Caco-2 (cell line): ENCODE measurements at regions of chr14 and their contacts with region 1.

Region 1: GRCh38 chr14:21039585-21040369 is 2.4 kb upstream of the RNASE7 start:
- DNase-seq: peak; percentile 54 to 68
- H3K4me3 ChIP-seq: no peak overlapping the region
- H3K4me3 Mint-ChIP-seq: no peak overlapping the region
- H3K27ac Mint-ChIP-seq: no peak overlapping the region
- H3K4me1 ChIP-seq: peaks cover 24% of the 10 kb centered on the region
- H3K4me1 Mint-ChIP-seq: peaks cover 21% of the 10 kb centered on the region
- H3K27me3 ChIP-seq: no peaks in the 10 kb centered on the region
- H3K27me3 Mint-ChIP-seq: peaks cover 10% of the 10 kb centered on the region
- CTCF ChIP-seq: peak; percentile 60 to 72

Region 2: DNA sequence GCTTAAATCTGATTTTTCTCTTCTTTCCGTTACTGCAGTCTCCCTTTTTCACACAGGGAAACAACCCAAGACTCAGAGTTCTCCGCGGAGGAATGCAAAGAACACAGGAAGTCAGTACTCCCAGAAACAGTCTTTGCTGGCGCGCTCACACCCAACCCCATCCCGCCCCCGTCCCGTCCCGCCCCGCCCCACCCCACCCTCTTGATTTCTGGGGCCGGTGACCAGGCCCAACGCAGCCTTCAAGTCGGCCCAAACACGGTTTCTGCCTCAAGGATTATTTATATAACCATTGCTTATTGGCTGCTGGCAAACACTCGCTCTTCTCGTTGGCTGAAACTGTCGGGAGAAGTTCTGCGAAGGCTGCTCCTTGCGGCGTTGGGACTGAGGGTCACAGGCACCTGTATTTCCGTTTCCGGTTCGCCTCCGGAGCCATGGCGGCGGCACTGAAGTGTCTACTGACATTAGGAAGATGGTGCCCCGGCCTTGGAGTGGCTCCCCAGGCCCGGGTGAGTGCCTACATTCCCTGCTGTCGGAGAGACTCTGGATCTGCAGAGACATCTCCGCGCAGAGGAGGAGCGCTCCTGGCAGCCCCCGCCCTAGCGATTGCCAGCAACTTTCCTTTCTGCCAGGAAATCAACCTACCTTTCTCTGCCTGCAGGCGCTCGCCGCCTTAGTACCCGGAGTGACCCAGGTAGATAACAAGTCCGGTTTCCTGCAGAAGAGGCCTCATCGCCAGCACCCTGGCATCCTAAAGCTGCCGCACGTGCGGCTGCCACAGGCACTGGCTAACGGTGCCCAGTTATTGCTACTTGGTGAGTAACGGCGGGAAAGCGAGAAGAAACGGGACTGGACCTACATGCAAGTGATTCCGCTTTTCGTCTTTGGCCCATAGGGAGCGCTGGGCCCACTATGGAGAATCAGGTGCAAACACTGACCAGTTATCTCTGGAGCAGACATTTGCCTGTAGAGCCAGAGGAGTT is 49.9 kb before region 1 on chr14 and contains the start of gene METTL17:
- CTCF ChIA-PET with region 1: no interaction called
- POLR2A ChIA-PET with region 1: no interaction called
- intact Hi-C with region 1: loop called (anchors 1 kb)
- DNase-seq: peak; percentile 91 to 95
- H3K4me3 ChIP-seq: peak within 1 kb of the TSS; percentile 65
- H3K4me3 Mint-ChIP-seq: peak within 1 kb of the TSS; percentile 71
- H3K27ac Mint-ChIP-seq: peak within 1 kb of the TSS; percentile 33
- H3K4me1 ChIP-seq: peaks cover 19% of the 10 kb centered on the region
- H3K4me1 Mint-ChIP-seq: peaks cover 6% of the 10 kb centered on the region
- H3K27me3 ChIP-seq: no peaks in the 10 kb centered on the region
- H3K27me3 Mint-ChIP-seq: no peaks in the 10 kb centered on the region
- CTCF ChIP-seq: peak in 1 of 2 experiments; percentile 52
- total RNA-seq, gene METTL17: 78.8 and 80.5 TPM in 2 replicates

Region 3: GRCh38 chr14:21024585-21025370 is 15.0 kb before region 1 on chr14 and contains the start of gene NDRG2:
- CTCF ChIA-PET with region 1: no interaction called
- POLR2A ChIA-PET with region 1: no interaction called
- intact Hi-C with region 1: loop called (anchors 1 kb)
- DNase-seq: peak; percentile 84 to 86
- H3K4me3 ChIP-seq: peak within 1 kb of the TSS; percentile 73
- H3K4me3 Mint-ChIP-seq: peak within 1 kb of the TSS; percentile 72
- H3K27ac Mint-ChIP-seq: peak within 1 kb of the TSS; percentile 73
- H3K4me1 ChIP-seq: peaks cover 15% of the 10 kb centered on the region
- H3K4me1 Mint-ChIP-seq: peaks cover 18% of the 10 kb centered on the region
- H3K27me3 ChIP-seq: no peaks in the 10 kb centered on the region
- H3K27me3 Mint-ChIP-seq: no peaks in the 10 kb centered on the region
- CTCF ChIP-seq: no peak
- total RNA-seq, gene NDRG2: 16.4 and 17.7 TPM in 2 replicates

Region 4: DNA sequence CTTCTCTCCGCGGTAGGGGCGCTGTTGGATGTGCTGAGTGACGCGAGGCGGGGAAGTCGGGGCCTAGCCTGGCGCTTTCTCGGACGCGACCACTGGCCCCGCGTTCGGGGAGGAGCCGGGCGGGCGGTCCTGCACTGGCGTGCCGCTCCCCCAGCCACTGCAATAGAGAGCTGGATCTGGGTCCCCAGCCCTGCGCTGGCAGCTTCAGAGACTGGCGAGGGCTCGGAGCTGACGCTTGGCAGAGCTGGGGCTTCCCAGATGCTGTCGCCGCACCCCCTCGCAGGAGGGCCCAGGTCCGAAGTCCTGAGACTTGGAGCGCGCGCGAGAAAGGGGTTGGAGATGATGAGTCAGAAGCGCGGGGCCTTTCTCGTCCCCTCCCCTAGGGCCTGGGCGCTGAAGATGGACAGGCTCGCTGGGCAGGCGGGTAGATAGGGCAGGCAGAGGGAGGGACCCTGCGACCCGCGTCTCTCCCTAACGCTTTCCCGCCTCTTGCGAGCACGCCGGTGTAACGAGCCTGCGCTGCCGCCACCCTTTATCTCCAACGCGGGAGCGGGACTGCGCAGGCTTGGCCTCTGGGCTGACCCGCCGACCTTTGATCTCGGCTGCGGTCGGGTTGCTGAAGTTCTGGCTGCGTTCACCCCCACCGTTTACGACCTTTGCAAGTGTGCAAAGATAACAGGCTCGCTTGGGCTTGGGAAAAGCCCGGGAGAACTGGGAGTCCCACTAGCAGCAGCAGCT is 64.1 kb after region 1 on chr14:
- CTCF ChIA-PET with region 1: interaction called, 14 read pairs
- POLR2A ChIA-PET with region 1: no interaction called
- intact Hi-C with region 1: loop called (anchors 1 kb)
- DNase-seq: peak; percentile 95 to 97
- H3K4me3 ChIP-seq: peak overlapping the region; percentile 72
- H3K4me3 Mint-ChIP-seq: peak overlapping the region; percentile 87
- H3K27ac Mint-ChIP-seq: peak overlapping the region; percentile 85
- H3K4me1 ChIP-seq: peaks cover 46% of the 10 kb centered on the region
- H3K4me1 Mint-ChIP-seq: peaks cover 39% of the 10 kb centered on the region
- H3K27me3 ChIP-seq: no peaks in the 10 kb centered on the region
- H3K27me3 Mint-ChIP-seq: no peaks in the 10 kb centered on the region
- CTCF ChIP-seq: peak; percentile 59 to 85